SK-N-SH (cell line): ENCODE measurements at regions of chr6 and their contacts with region 1.

Region 1: GRCh38 chr6:2634139-2634964 is 116.4 kb downstream of the MYLK4 start:
- DNase-seq: peak; percentile 93
- H3K4me3 ChIP-seq: peak overlapping the region; percentile 49 to 68
- H3K27ac ChIP-seq: no peak overlapping the region
- H3K4me1 ChIP-seq: peaks cover 6 to 11% of the 10 kb centered on the region in 2 experiments; a peak in 2 of 4 replicates
- H3K27me3 ChIP-seq: no peaks in the 10 kb centered on the region; the same call in 1 of the 2 replicates
- CTCF ChIP-seq: peak; percentile 97
- EP300 ChIP-seq: no peak
- RAD21 ChIP-seq: peak; percentile 81

Region 2: DNA sequence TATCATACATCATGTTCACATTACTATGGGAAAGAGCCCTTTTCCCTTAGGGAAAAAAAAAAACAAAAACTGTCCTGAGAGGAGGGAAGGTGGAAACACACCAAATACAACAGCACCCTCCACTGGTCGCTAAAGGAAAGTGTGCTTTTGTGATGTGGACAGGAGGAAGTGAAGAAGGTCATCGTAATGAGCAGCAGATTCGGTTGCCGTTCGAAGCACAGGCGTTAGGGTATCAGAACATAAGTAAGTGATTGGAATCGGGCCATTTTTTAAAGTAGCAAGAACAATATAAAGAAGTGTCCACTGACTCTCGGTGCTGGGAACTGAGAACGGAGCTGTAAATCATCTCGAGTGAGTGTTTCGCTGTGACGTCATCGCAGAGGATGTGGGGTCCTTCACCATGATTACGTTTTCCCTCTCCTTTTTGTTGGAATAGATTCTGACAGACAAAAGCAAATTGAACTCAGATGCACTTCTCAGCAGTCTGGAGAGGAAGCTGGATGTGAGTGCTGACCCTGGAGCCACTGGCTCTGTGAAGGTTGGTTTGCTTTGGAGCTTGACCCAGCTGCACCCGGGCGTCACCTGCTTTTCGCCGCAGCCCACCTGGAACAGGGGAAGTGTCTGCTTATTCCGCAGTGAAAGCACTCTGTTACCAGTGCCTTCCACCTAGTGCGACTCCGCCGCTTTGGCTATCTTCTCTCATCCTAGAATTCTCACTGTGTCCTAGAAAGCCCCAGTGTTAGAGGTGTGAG is 185.4 kb before region 1 on chr6:
- CTCF ChIA-PET with region 1: interaction called, 16 read pairs
- POLR2A ChIA-PET with region 1: no interaction called
- DNase-seq: peak; percentile 69
- H3K4me3 ChIP-seq: peak overlapping the region; percentile 30 to 59
- H3K27ac ChIP-seq: no peak overlapping the region
- H3K4me1 ChIP-seq: peaks cover 0 to 16% of the 10 kb centered on the region in 2 experiments; a peak in 2 of 4 replicates
- H3K27me3 ChIP-seq: no peaks in the 10 kb centered on the region; the same call in 1 of the 2 replicates
- CTCF ChIP-seq: peak; percentile 81
- EP300 ChIP-seq: no peak
- RAD21 ChIP-seq: peak; percentile 81

Region 3: DNA sequence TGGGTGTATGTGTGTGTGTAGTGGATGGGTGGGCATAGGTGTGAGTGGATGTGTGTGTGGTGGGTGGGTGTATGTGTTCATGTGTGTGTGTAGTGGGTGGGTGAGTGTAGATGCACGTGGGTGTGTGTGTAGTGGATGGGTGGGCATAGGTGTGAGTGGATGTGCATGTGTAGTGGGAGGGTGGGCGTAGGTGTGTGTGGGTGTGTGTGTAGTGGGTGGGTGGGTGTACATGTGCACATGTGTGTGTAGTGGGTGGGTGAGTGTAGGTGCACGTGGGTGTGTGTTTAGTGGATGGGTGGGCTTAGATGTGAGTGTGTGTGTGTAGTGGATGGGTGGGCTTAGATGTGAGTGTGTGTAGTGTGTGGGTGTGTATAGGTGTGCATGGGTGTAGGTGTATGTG is 12.0 kb after region 1 on chr6:
- CTCF ChIA-PET with region 1: interaction called, 43 read pairs
- POLR2A ChIA-PET with region 1: interaction called, 3 read pairs
- DNase-seq: no peak
- H3K4me3 ChIP-seq: no peak overlapping the region
- H3K27ac ChIP-seq: no peak overlapping the region
- H3K4me1 ChIP-seq: no peaks in the 10 kb centered on the region
- H3K27me3 ChIP-seq: peaks cover 8% of the 10 kb centered on the region; the same call in 1 of the 2 replicates
- CTCF ChIP-seq: no peak
- EP300 ChIP-seq: no peak
- RAD21 ChIP-seq: no peak

Region 4: DNA sequence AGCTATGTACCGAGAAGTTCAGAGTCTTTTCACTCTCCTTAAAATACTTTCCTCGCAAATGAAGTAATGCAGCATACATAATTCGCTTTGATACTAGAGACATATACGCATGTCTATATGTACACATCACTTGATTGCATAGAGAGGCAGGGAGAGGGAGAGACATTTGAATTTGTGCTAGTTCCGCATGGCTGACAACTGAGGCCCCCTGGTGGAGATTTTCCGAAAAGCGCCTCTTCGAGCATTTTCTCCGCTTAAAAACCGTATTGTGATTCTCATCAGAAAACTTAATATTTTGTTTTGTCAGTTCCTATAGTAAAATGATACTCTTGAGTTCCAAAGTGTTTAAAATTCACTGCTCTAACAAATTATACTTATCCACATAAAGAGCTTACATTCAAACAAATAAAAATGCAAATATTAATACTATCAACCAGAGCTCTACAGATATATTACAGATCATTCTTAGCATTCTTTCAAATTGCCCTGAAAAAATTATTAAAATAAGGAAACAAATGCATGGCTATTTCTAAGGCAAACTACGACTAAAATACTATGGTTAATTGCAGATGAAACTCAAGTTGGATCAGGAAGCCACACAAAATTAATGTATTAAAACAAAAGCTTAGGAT is 115.7 kb after region 1 on chr6:
- CTCF ChIA-PET with region 1: interaction called, 16 read pairs
- POLR2A ChIA-PET with region 1: no interaction called
- DNase-seq: peak; percentile 55
- H3K4me3 ChIP-seq: peak overlapping the region in 1 of 2 experiments; percentile 18; a peak in 1 of 4 replicates
- H3K27ac ChIP-seq: no peak overlapping the region
- H3K4me1 ChIP-seq: peaks cover 0 to 11% of the 10 kb centered on the region in 2 experiments; a peak in 3 of 4 replicates
- H3K27me3 ChIP-seq: no peaks in the 10 kb centered on the region
- CTCF ChIP-seq: peak; percentile 91
- EP300 ChIP-seq: no peak
- RAD21 ChIP-seq: peak; percentile 62

Region 5: DNA sequence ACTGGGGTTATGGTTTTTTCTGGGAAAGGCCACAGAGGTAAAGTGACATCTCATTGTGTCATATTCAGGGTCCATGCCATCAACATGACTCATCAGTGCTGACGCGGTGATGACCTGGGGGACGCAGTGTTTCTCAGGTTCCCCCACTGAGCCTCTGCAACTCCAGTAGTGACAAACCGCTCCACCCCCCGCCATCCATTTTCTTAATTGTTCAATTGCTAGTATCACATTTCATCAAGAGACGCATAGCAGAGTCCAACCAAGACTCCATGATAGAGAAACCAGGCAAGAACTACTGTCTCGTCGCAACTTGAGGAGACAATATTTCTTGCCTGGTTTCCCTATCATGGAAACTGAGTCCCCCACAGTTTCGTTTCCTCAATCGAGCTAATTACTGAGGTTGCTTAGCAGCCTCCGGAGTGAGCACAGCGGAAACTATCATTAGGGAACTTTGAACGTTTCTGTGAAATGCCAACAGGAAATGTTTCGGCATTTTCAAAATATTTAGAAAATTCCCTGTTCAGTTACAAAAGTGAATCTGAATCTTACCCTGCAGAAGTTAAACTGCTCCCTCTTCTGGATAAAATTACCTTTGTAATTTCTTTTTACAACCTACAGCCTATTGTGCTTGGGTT is 219.5 kb after region 1 on chr6:
- CTCF ChIA-PET with region 1: no interaction called
- POLR2A ChIA-PET with region 1: no interaction called
- DNase-seq: no peak
- H3K4me3 ChIP-seq: no peak overlapping the region
- H3K27ac ChIP-seq: peak overlapping the region; percentile 32 to 80; a peak in 3 of 4 replicates
- H3K4me1 ChIP-seq: peaks cover 16 to 25% of the 10 kb centered on the region in 2 experiments; a peak in 2 of 4 replicates
- H3K27me3 ChIP-seq: no peaks in the 10 kb centered on the region
- CTCF ChIP-seq: peak; percentile 53
- EP300 ChIP-seq: no peak
- RAD21 ChIP-seq: peak; percentile 30